Activated T-helper 2 cell treated with anti-CD3 and anti-CD28 coated beads, Interferon-gamma antibody, Interleukin-2, Interleukin-4, amounts not matched to agents 10 μg/mL and 5 μg/mL and 100 μg/mL, durations not matched to agents 14 hours and 24 hours and 36 hours (primary cell): ENCODE measurements at regions of chr5 and their contacts with region 1.

Region 1: GRCh38 chr5:44774279-44774880 is 34.4 kb upstream of the MRPS30 start:
- DNase-seq: no peak
- H3K4me3 Mint-ChIP-seq: no peak overlapping the region
- H3K27ac Mint-ChIP-seq: no peak overlapping the region
- H3K4me1 Mint-ChIP-seq: no peaks in the 10 kb centered on the region
- H3K27me3 Mint-ChIP-seq: peaks cover 7% of the 10 kb centered on the region

Region 2: GRCh38 chr5:43729846-43730478 is 1044.4 kb before region 1 on chr5:
- intact Hi-C with region 1: loop called (anchors 10 kb)
- DNase-seq: no peak
- H3K4me3 Mint-ChIP-seq: no peak overlapping the region
- H3K27ac Mint-ChIP-seq: no peak overlapping the region
- H3K4me1 Mint-ChIP-seq: no peaks in the 10 kb centered on the region
- H3K27me3 Mint-ChIP-seq: peaks cover 3% of the 10 kb centered on the region

Region 3: DNA sequence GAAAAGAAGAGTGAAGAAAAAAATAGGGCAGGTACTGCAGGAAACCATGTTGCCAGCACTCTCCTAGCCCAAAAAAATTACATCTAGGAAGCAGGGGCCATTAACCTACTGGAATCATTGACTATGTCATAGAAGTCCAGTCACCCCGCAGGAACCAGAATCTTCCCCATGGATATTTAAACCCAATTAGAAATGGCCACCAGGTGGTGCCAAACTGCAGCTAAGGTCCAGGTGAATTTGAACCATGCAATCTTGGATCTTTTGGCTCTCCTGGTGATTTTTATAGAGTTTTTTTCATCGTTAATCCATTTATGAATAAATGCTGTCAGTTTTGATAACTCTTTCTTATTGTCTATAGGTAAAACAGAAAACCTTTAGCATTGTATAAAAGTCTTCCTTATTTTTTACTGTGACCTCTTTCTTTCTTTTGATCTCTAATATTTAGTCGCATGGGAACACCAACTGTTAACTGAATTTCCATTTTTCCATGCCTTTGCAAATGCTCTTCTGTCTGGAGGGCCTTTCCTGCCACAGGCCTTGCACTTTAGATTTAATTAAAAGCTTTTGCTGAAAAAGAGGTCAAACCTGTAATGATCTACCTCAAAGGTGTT is 237.6 kb before region 1 on chr5:
- intact Hi-C with region 1: loop called (anchors 2 kb)
- DNase-seq: no peak
- H3K4me3 Mint-ChIP-seq: no peak overlapping the region
- H3K27ac Mint-ChIP-seq: no peak overlapping the region
- H3K4me1 Mint-ChIP-seq: no peaks in the 10 kb centered on the region
- H3K27me3 Mint-ChIP-seq: no peaks in the 10 kb centered on the region